ENCODE measurements at regions of chr6 and their contacts with region 1.

Region 1: DNA sequence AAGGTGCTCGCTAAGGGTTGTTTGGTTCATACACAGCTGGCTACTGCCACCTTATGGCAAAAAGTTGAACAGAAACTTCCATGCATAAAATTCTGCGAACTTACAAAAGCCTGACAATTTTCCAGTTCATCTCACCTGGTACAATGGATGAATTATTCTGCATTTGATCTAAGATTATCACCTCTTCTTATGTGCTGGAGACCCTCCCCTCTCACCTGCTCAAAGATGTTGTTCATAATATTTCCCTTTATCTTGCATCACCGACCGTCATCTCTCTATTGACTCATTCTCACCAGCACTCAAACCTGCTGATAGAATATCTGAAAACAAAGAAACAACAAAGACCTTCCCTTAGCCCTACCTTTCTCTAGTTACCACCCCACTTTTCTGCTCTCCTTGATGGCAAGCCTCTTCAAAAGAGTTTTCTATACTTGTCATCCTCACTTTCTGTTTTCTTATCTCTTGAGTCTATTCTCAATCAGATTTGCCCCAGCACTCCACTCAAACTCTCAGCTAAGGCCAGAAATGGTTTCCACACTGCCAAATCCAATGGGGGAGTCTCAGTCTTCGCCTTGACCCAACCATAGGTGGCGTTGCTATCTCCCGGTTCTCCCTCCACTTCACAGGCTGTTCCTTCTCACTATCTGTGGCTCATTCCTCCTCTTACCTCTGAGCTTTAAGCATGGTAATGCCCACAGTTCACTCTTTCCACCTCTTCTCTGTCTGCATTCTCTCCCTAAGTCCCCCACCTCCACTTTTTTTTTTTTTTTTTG is 25.8 kb downstream of the SNRNP48 start:
- DNase-seq: no peak
- ATAC-seq: peak; percentile 54
- H3K4me3 Mint-ChIP-seq: no peak overlapping the region
- H3K27ac Mint-ChIP-seq: no peak overlapping the region
- H3K4me1 Mint-ChIP-seq: peaks cover 8% of the 10 kb centered on the region
- H3K27me3 Mint-ChIP-seq: peaks cover 4% of the 10 kb centered on the region
- CTCF ChIP-seq: peak; percentile 26

Region 2: GRCh38 chr6:6676910-6677441 is 938.8 kb before region 1 on chr6:
- CTCF ChIA-PET with region 1: interaction called, 12 read pairs
- POLR2A ChIA-PET with region 1: no interaction called
- intact Hi-C with region 1: loop called (anchors 1 kb)
- DNase-seq: peak; percentile 65
- ATAC-seq: peak; percentile 94
- H3K4me3 Mint-ChIP-seq: no peak overlapping the region
- H3K27ac Mint-ChIP-seq: no peak overlapping the region
- H3K4me1 Mint-ChIP-seq: peaks cover 8% of the 10 kb centered on the region
- H3K27me3 Mint-ChIP-seq: peaks cover 6% of the 10 kb centered on the region
- CTCF ChIP-seq: peak; percentile 95

Region 3: GRCh38 chr6:6758915-6759654 is 856.7 kb before region 1 on chr6:
- CTCF ChIA-PET with region 1: interaction called, 3 read pairs
- POLR2A ChIA-PET with region 1: no interaction called
- intact Hi-C with region 1: loop called (anchors 1 kb)
- DNase-seq: peak; percentile 22
- ATAC-seq: peak; percentile 88
- H3K4me3 Mint-ChIP-seq: no peak overlapping the region
- H3K27ac Mint-ChIP-seq: no peak overlapping the region
- H3K4me1 Mint-ChIP-seq: peaks cover 21% of the 10 kb centered on the region
- H3K27me3 Mint-ChIP-seq: peaks cover 9% of the 10 kb centered on the region
- CTCF ChIP-seq: no peak

Region 4: DNA sequence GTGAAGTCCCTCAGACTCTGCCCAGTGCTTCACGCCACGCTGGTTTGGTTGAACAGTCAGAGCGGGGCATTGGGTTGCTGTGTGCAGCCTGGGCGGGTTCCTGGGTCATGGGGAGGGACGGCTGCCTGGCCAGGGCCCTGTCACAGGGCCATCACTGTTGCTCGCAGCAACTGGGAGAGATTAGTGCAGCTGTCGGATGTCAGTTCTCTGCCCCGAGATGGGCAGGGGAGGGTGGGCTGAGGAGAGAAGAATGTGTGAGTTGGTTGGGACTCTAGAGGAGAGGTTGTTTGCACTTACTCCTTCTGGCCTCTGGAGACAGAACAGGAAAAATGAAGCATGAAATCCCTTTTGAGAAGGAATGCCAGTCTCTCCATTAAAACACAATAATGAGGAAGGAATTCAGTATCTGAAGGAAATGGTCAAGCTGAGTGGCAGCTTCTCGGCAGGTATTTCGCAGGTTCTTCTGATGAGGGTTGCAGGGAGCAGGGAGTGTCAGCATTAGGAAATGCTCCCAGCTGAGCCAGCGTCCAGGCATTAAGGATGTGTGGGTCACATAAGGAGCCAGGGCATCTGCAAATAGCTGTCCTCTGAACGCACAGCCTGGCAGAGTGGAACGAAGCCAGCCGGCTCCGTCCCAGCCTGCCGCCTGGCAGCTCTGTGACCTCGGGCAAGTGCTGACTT is 398.7 kb before region 1 on chr6:
- CTCF ChIA-PET with region 1: no interaction called
- POLR2A ChIA-PET with region 1: no interaction called
- intact Hi-C with region 1: no loop called
- DNase-seq: no peak
- ATAC-seq: no peak
- H3K4me3 Mint-ChIP-seq: no peak overlapping the region
- H3K27ac Mint-ChIP-seq: no peak overlapping the region
- H3K4me1 Mint-ChIP-seq: no peaks in the 10 kb centered on the region
- H3K27me3 Mint-ChIP-seq: no peaks in the 10 kb centered on the region
- CTCF ChIP-seq: no peak

Region 5: GRCh38 chr6:7424967-7425807 is 190.6 kb before region 1 on chr6:
- CTCF ChIA-PET with region 1: interaction called, 3 read pairs
- POLR2A ChIA-PET with region 1: no interaction called
- intact Hi-C with region 1: loop called (anchors 1 kb)
- DNase-seq: no peak
- ATAC-seq: no peak
- H3K4me3 Mint-ChIP-seq: no peak overlapping the region
- H3K27ac Mint-ChIP-seq: no peak overlapping the region
- H3K4me1 Mint-ChIP-seq: no peaks in the 10 kb centered on the region
- H3K27me3 Mint-ChIP-seq: no peaks in the 10 kb centered on the region
- CTCF ChIP-seq: no peak

Region 6: DNA sequence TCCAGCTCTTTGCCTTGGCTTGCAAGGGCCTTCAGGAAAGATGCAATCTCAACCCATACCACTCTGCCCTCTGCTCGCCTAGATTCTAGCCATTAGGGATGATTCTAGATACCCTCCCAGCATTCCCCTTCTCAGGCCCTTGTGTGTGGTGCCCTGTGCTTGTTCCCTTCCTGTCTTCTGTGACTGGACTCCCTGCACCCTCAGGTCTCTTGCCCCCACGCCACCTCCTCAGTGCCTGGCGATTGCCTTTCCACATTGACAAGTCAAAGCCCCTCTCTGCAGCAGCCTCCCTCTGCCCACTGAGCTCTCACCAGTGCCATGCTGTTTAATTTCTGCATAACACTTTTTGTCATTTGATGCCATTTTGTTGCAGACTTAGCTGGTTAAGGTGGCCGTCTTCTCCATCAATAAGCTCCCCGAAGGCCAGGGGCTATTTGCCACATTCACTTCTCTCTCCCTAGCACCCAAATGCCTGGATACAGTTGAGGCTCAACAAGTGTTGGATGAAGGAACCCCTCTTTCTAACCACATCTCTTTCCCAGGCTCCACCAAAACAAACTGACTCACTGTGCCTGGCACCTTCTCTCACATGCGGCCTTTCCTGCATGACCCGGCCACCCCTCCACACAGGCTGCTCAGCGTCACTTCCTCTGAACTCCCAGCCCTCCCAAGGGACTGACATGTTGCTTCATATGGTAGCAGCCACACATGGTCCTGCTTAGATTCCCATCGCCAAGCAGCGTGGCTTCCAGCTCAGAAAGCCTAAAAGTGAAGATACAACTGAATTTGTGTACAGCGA is 299.4 kb after region 1 on chr6:
- CTCF ChIA-PET with region 1: no interaction called
- POLR2A ChIA-PET with region 1: no interaction called
- intact Hi-C with region 1: no loop called
- DNase-seq: peak; percentile 34
- ATAC-seq: peak; percentile 63
- H3K4me3 Mint-ChIP-seq: no peak overlapping the region
- H3K27ac Mint-ChIP-seq: no peak overlapping the region
- H3K4me1 Mint-ChIP-seq: peaks cover 6% of the 10 kb centered on the region
- H3K27me3 Mint-ChIP-seq: no peaks in the 10 kb centered on the region
- CTCF ChIP-seq: no peak

Region 7: DNA sequence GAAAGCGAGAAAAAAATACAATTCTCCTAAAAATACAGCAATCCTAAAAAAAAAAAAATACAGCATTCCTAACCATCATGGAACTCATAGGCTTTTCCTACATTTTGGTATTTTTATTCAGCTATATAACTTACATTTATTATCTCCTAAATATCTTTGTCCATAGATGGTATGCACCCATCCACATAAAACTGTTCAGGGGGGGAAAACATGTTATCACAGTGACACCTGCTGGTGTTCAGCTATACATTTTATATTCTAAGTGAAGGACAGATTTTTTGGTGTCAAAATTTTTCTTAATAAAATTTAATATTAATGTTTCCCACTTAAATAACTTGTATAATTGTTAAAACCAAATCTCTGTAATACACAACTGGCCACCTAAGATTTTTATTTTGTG is 390.4 kb after region 1 on chr6:
- CTCF ChIA-PET with region 1: no interaction called
- POLR2A ChIA-PET with region 1: no interaction called
- intact Hi-C with region 1: loop called (anchors 5 kb)
- DNase-seq: no peak
- ATAC-seq: no peak
- H3K4me3 Mint-ChIP-seq: no peak overlapping the region
- H3K27ac Mint-ChIP-seq: no peak overlapping the region
- H3K4me1 Mint-ChIP-seq: no peaks in the 10 kb centered on the region
- H3K27me3 Mint-ChIP-seq: no peaks in the 10 kb centered on the region
- CTCF ChIP-seq: no peak